Endothelial cell of umbilical vein (primary cell): ENCODE measurements at regions of chr2 and their contacts with region 1.

Region 1: DNA sequence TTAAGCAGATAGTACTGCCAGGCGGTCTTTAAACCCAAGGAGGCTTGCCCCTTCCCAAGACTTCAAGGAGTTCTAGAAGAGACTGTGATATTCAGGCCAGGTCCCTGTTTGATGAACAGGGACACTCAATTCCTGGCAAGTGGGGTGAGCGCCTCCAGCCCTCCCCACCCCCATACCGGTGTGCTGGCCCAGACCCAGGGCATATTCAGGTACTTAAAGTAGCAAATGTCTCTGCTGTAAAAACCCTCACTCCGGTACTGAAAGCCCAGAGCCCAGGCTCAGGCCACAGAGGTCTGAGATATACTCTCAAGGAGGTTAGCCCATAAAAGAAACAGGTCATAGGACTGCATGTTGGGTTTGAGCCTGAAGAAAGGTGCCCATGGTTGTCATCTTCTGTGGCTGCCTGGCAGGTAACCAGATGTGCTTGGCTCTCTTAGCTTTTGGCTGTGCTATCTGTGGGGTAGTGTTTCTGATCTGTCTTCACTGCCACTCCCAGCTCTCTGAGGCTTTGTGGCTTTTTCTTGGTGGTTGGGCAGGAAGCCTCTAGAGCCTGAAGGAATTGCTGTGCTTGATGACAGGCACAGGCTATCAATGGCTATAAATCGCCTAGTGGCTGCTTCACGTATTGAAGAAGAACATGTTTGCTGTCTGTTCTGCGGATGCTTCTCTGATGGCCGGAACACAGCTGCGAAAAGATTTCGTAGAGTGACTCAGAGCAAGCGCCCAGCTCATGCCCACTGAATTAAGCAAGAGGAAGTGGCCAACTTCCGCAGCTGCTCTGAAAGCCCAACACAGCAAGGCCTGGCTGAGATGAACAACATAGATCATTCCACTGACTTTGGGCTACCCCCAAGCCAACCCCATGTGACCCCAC is 63.3 kb upstream of the ALPP start:
- DNase-seq: peak; percentile 83
- H3K4me3 ChIP-seq: no peak overlapping the region
- H3K27ac ChIP-seq: peak overlapping the region; percentile 83
- H3K4me1 ChIP-seq: peaks cover 35% of the 10 kb centered on the region
- H3K27me3 ChIP-seq: no peaks in the 10 kb centered on the region
- CTCF ChIP-seq: peak; percentile 20 to 28
- POLR2A ChIP-seq: no peak

Region 2: GRCh38 chr2:231139796-231140195 is 1175.5 kb before region 1 on chr2:
- CTCF ChIA-PET with region 1: no interaction called
- POLR2A ChIA-PET with region 1: no interaction called
- dilution Hi-C with region 1: no loop called
- intact Hi-C with region 1: no loop called
- DNase-seq: no peak
- H3K4me3 ChIP-seq: no peak overlapping the region
- H3K27ac ChIP-seq: no peak overlapping the region
- H3K4me1 ChIP-seq: peaks cover 6% of the 10 kb centered on the region
- H3K27me3 ChIP-seq: no peaks in the 10 kb centered on the region
- CTCF ChIP-seq: no peak
- POLR2A ChIP-seq: no peak

Region 3: DNA sequence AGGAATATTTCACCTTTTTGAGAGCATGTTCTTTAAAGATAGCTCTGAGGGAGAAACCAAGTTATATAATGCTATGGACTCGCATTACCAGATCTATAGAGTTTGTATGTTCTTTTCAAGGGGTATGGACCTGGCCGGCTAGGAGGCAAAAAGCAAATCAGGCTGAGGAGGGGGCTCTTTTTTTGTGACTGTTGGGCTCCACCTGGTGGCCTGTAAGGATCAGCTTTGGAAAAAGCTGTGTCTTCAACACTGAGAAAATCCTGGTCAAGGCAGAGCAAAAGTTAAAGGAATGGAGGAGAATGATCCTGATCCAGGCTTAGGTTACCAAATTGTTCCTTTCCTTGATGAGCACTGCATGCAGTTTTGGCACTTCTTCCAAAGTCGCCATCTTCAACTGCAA is 173.2 kb before region 1 on chr2:
- CTCF ChIA-PET with region 1: interaction called, 3 read pairs
- POLR2A ChIA-PET with region 1: no interaction called
- dilution Hi-C with region 1: no loop called
- intact Hi-C with region 1: loop called (anchors 2 kb)
- DNase-seq: peak; percentile 41
- H3K4me3 ChIP-seq: no peak overlapping the region
- H3K27ac ChIP-seq: no peak overlapping the region
- H3K4me1 ChIP-seq: peaks cover 12% of the 10 kb centered on the region
- H3K27me3 ChIP-seq: no peaks in the 10 kb centered on the region
- CTCF ChIP-seq: peak; percentile 64 to 70
- POLR2A ChIP-seq: no peak

Region 4: DNA sequence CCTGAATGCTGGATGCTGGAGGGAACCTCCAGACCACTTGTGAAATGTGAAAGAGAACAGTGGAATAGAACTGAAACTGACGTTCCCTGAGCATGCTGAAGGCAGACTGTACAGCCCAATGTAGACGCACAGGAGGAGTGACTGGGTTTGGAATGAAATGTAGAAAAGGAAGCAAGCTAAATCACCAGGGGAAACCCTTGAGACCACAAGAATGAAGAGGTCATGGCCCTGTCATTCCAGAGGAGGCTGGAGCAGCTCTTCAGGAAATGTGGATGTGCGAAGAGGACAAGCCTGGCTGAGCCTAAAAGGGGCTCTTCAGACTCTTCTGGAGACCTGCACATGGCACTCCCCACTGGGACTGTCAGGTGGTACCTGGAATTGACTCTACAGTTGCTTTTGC is 55.2 kb before region 1 on chr2:
- CTCF ChIA-PET with region 1: interaction called, 8 read pairs
- POLR2A ChIA-PET with region 1: interaction called, 5 read pairs
- dilution Hi-C with region 1: no loop called
- intact Hi-C with region 1: loop called (anchors 1 kb)
- DNase-seq: peak; percentile 84
- H3K4me3 ChIP-seq: peak overlapping the region in 1 of 3 experiments; percentile 17
- H3K27ac ChIP-seq: peak overlapping the region; percentile 30
- H3K4me1 ChIP-seq: peaks cover 22% of the 10 kb centered on the region
- H3K27me3 ChIP-seq: no peaks in the 10 kb centered on the region
- CTCF ChIP-seq: no peak
- POLR2A ChIP-seq: no peak

Region 5: DNA sequence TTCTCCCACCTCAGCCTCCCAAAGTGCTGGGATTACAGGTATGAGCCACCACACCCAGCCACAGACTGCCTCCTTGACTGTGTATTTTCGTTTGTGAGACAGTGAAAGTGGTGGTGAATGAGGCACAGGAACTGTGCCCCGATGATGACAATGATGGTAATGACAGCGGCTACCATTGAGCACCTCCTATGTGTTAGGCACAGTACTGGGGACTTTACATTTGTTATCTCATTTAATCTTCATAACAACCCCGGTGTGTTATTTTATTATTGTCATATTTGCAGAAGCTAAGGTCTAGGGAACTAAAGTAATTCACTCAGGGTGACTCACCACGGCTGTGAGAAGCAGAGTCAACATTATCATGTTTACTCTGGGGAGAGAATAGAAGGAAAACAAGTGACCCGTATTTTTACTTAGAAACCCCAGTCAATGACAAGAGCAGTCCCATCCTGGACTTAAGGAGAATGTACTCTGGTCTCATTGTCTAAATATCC is 14.3 kb before region 1 on chr2:
- CTCF ChIA-PET with region 1: interaction called, 14 read pairs
- POLR2A ChIA-PET with region 1: no interaction called
- dilution Hi-C with region 1: no loop called
- intact Hi-C with region 1: loop called (anchors 1 kb)
- DNase-seq: peak; percentile 83
- H3K4me3 ChIP-seq: no peak overlapping the region
- H3K27ac ChIP-seq: peak overlapping the region; percentile 82
- H3K4me1 ChIP-seq: peaks cover 14% of the 10 kb centered on the region
- H3K27me3 ChIP-seq: no peaks in the 10 kb centered on the region
- CTCF ChIP-seq: no peak
- POLR2A ChIP-seq: no peak

Region 6: DNA sequence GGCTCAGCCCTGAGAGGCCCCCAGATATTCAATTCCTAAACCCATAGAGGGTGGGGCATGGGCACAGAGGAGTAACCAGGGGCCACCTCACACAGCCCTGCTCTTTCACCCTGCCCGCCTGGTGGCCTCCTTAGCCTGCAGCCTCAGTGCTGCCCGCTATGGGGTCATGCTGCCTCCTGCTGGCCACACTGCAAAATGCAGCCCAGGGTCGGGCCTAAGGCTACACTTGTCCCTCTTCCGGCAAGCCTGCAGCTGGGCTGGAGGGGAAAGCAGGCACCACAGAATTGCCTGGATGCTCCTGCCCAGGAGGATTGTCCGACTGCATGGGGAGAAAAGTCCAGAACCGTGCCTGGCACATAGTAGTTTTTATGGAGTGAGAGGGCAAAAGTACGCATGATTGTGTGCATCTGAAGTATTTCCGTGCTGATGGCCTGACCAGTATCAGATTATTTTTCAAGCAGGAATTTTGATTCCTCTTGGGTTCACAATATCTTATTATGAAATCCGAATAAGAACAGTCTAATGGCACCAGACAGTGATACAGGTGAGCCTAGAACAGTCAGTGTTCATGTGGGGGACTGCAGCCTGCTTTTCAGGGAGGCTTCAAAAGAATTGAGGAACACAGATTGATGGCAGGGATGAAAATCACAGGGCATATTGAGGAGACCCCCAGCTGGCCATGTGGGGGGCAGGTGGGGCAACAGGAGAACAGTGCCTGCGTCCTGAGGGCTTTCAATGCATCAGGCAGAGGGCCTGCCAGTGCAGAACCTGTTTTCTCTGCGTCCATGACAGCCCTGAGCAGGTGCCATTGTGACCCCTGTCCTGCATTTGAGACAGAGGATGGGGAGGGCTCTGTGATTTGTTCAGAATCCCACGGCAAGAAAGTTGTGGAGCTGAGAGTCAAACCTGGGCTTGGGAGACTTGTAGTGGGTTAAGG is 12.1 kb after region 1 on chr2:
- CTCF ChIA-PET with region 1: interaction called, 49 read pairs
- POLR2A ChIA-PET with region 1: interaction called, 3 read pairs
- dilution Hi-C with region 1: no loop called
- intact Hi-C with region 1: no loop called
- DNase-seq: peak; percentile 73
- H3K4me3 ChIP-seq: no peak overlapping the region
- H3K27ac ChIP-seq: no peak overlapping the region
- H3K4me1 ChIP-seq: no peaks in the 10 kb centered on the region
- H3K27me3 ChIP-seq: no peaks in the 10 kb centered on the region
- CTCF ChIP-seq: peak; percentile 74 to 86
- POLR2A ChIP-seq: no peak

Region 7: DNA sequence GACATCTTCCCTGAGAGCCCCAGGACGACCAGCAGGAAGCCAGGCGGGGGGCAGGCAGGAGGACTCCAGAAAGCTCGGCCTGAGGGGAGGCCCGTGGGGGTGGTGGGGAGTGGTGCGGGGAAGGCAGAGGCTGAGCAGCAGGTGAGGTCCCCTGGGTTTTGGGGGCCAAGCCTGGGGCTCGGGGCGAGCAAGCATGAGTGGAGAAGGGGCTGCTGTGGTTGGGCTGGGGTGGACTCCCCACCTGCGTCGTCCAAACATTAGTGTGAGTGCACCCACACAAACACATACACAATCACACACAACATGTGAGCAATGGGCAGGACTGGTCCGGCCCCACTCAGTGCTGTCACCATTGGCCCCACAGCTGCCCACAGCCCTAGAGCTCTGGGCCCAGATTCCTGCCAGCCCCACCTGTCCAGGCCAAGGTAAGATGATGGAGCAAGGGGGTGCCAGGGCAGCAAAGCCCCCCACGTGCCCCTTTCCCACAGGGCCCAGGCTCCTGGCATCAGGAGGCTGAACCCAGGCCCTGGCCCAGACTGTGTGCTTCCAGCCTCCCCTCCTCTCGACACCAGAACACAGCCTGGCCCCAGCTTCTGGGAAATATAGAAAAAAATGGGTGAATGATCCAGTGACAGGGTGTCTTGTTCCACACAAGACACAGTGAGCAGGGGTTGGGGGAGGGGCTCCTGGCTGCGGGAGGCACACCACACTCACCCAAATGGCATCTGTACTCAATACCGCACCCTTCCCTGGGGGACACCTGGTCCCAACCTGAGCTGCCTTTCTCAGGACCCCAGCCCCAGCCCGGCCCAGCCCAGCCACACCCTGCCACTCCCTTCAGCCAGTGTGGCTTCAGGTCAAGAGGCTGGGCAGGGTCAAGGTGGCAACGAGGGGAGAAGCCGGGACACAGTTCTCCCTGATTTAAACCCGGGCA is 62.8 kb after region 1 on chr2:
- CTCF ChIA-PET with region 1: no interaction called
- POLR2A ChIA-PET with region 1: no interaction called
- dilution Hi-C with region 1: no loop called
- intact Hi-C with region 1: no loop called
- DNase-seq: no peak
- H3K4me3 ChIP-seq: no peak overlapping the region
- H3K27ac ChIP-seq: no peak overlapping the region
- H3K4me1 ChIP-seq: no peaks in the 10 kb centered on the region
- H3K27me3 ChIP-seq: peaks cover 12 to 17% of the 10 kb centered on the region in 2 experiments
- CTCF ChIP-seq: no peak
- POLR2A ChIP-seq: no peak